Activated CD4-positive, alpha-beta memory T cell treated with anti-CD3 and anti-CD28 coated beads for 36 hours (primary cell): ENCODE measurements at regions of chr18 and their contacts with region 1.

Region 1: DNA sequence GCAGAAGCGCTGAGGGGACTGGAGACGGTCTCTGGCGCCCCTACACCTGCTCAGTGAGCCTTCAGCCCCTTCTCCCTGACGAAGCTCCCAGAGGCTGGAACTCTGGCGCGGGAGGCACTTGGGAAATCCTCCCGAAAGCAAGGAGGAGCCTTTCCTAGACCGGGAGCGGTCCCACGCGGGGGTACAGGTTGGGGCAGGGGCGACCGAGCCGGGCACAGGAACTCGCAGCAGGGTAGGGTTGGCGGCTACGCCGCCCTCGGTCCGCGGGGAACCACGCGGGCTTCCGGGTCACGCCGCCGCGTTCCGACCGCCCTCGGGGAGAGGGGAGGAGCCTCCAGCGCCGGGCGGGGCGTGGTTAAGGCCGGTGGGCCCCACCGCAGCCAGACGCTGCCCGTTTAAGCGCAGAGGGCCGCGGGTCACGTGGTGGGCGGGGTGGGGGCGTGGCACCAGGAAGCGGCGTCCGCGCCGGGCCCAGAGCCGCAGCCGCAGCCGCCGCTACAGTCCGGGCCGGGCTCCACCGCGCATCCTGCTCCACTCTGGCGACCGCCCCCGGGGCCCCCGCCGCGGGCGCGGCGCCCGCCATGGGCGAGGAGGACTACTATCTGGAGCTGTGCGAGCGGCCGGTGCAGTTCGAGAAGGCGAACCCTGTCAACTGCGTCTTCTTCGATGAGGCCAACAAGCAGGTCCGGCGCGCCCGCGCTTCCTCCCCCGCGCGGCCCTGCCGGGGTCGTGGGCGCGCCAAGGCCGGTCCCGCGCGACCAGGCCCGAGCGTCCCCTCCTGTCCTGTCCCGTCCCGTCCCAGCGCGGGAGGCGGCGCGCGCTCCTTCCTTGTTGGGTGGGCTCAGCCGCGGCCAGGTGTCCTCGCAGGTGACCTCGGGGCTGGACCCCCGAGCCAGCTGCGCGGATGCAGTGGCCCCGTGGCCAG is at the start of gene RMC1:
- DNase-seq: peak; percentile 98
- H3K4me3 Mint-ChIP-seq: peak within 1 kb of the TSS; percentile 91
- H3K27ac Mint-ChIP-seq: peak within 1 kb of the TSS; percentile 87
- H3K4me1 Mint-ChIP-seq: peaks cover 32% of the 10 kb centered on the region
- H3K27me3 Mint-ChIP-seq: no peaks in the 10 kb centered on the region
- total RNA-seq, gene RMC1: 47.6 to 48.6 TPM

Region 2: GRCh38 chr18:23231340-23232021 is 271.8 kb before region 1 on chr18:
- CTCF ChIA-PET with region 1: no interaction called
- POLR2A ChIA-PET with region 1: no interaction called
- intact Hi-C with region 1: loop called (anchors 5 kb)
- DNase-seq: peak; percentile 87
- H3K4me3 Mint-ChIP-seq: peak overlapping the region; percentile 40
- H3K27ac Mint-ChIP-seq: peak overlapping the region; percentile 85
- H3K4me1 Mint-ChIP-seq: peaks cover 51% of the 10 kb centered on the region
- H3K27me3 Mint-ChIP-seq: peaks cover 3% of the 10 kb centered on the region

Region 3: DNA sequence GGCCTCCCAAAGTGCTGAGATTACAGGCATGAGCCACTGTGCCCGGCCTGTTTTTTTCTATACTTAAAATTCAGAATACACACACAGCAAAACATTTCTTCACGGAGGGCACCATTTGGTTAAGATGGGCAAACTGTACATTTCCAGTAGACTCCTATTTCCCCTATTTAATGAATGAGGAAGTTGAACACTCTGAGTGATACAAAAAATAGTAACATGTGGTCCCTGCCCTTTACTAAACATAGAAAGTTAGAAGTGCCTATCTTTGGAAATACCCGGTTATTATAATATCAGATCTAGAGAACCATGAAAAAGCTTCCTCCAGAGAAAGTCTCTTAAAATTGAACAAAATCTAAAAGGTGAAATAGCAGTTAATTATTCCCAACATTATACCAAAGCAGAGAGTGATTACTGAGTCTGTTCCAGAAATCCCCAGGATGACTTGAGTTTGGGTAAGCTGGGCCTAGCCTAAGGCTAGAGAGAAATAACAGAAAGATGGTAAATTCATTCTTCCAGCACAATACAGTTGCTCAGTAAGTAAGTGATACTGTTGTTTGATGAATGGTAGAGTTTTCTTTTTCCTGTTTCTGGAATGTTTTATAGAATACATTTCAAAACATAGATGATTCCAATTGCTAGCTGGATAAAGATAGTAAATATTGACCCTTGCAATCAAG is 23.3 kb before region 1 on chr18:
- CTCF ChIA-PET with region 1: interaction called, 15 read pairs
- POLR2A ChIA-PET with region 1: interaction called, 3 read pairs
- intact Hi-C with region 1: no loop called
- DNase-seq: no peak
- H3K4me3 Mint-ChIP-seq: no peak overlapping the region
- H3K27ac Mint-ChIP-seq: no peak overlapping the region
- H3K4me1 Mint-ChIP-seq: no peaks in the 10 kb centered on the region
- H3K27me3 Mint-ChIP-seq: no peaks in the 10 kb centered on the region

Region 4: DNA sequence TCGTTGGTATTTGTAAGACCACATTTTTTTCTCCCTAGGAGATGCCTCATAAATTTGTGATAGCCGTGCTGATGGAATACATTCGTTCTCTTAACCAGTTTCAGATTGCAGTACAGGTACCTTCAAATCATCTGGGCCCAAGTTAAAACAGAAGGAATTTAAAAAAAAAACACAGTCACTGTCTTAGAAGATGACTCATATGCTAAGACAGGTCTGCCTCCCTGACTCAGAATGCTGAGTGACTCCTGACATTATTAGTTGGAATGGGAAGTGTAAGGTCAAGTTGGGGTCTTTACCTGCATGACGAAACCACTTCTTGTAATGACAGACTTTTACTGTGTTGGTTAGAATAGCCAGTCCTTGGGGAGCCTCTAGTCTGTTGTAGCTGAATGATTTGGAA is 26.3 kb after region 1 on chr18:
- CTCF ChIA-PET with region 1: interaction called, 3 read pairs
- POLR2A ChIA-PET with region 1: no interaction called
- intact Hi-C with region 1: loop called (anchors 1 kb)
- DNase-seq: no peak
- H3K4me3 Mint-ChIP-seq: no peak overlapping the region
- H3K27ac Mint-ChIP-seq: peak overlapping the region; percentile 74
- H3K4me1 Mint-ChIP-seq: peaks cover 17% of the 10 kb centered on the region
- H3K27me3 Mint-ChIP-seq: no peaks in the 10 kb centered on the region

Region 5: GRCh38 chr18:23586249-23587196 is 83.2 kb after region 1 on chr18 and contains the start of gene NPC1:
- CTCF ChIA-PET with region 1: interaction called, 18 read pairs
- POLR2A ChIA-PET with region 1: no interaction called
- intact Hi-C with region 1: loop called (anchors 1 kb)
- DNase-seq: peak; percentile 94
- H3K4me3 Mint-ChIP-seq: peak within 1 kb of the TSS; percentile 95
- H3K27ac Mint-ChIP-seq: peak within 1 kb of the TSS; percentile 93
- H3K4me1 Mint-ChIP-seq: peaks cover 30% of the 10 kb centered on the region
- H3K27me3 Mint-ChIP-seq: peaks cover 3% of the 10 kb centered on the region
- total RNA-seq, gene NPC1: 39.3 to 39.9 TPM

Region 6: GRCh38 chr18:24014062-24014985 is 511.0 kb after region 1 on chr18 and contains the start of gene TTC39C:
- CTCF ChIA-PET with region 1: no interaction called
- POLR2A ChIA-PET with region 1: no interaction called
- intact Hi-C with region 1: loop called (anchors 5 kb)
- DNase-seq: peak; percentile 93
- H3K4me3 Mint-ChIP-seq: peak within 1 kb of the TSS; percentile 89
- H3K27ac Mint-ChIP-seq: peak within 1 kb of the TSS; percentile 89
- H3K4me1 Mint-ChIP-seq: peaks cover 71% of the 10 kb centered on the region
- H3K27me3 Mint-ChIP-seq: no peaks in the 10 kb centered on the region
- total RNA-seq, gene TTC39C: 48.9 to 49.0 TPM

Region 7: DNA sequence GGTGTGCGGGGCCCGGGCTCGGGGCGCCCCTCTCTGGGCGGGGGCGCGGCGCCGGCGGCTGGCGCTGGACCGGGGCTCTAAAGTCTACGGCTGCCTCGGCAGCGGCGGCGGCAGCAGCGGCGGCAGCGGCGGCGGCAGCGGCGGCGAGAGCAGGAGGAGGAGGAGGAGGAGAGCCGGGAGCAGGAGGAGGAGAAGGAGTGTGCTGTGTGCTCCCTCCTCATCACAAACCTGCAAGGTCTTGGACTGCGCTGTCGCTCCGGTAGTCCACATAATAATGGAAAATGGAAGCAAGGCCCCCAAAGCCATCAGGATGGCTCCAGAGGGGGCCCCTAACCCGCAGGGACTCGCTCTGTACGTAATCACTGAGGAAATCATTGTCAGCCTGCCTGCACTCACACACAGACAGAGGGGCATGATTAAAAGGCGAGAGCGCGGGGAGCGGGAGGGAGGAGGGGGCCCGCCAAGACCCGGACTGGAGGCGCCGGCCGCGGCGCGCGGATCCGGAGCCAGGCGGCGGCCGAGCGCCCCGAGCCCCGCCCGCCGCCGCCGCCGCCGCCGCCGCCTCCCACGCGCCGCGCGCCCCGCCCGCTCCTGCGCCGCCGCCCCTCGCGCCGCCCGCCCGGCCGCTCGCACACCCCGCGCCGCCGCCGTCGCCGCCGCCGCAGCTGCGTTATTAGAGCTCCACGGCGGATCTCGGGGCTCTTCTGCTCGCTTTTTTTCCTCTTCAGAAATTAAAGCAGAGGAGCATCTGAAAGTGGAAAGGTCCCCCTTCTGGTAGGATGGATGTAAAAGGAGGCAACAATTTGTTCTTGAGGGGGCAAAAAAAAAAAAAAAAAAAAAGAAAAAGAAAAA is 1848.7 kb after region 1 on chr18 and contains the start of gene ZNF521:
- CTCF ChIA-PET with region 1: no interaction called
- POLR2A ChIA-PET with region 1: no interaction called
- intact Hi-C with region 1: no loop called
- DNase-seq: peak; percentile 54
- H3K4me3 Mint-ChIP-seq: peak within 1 kb of the TSS; percentile 52
- H3K27ac Mint-ChIP-seq: no peak within 1 kb of the TSS
- H3K4me1 Mint-ChIP-seq: peaks cover 10% of the 10 kb centered on the region
- H3K27me3 Mint-ChIP-seq: peaks cover 42% of the 10 kb centered on the region
- total RNA-seq, gene ZNF521: not detected